ENCODE measurements at regions of chr4 and their contacts with region 1.

Region 1: DNA sequence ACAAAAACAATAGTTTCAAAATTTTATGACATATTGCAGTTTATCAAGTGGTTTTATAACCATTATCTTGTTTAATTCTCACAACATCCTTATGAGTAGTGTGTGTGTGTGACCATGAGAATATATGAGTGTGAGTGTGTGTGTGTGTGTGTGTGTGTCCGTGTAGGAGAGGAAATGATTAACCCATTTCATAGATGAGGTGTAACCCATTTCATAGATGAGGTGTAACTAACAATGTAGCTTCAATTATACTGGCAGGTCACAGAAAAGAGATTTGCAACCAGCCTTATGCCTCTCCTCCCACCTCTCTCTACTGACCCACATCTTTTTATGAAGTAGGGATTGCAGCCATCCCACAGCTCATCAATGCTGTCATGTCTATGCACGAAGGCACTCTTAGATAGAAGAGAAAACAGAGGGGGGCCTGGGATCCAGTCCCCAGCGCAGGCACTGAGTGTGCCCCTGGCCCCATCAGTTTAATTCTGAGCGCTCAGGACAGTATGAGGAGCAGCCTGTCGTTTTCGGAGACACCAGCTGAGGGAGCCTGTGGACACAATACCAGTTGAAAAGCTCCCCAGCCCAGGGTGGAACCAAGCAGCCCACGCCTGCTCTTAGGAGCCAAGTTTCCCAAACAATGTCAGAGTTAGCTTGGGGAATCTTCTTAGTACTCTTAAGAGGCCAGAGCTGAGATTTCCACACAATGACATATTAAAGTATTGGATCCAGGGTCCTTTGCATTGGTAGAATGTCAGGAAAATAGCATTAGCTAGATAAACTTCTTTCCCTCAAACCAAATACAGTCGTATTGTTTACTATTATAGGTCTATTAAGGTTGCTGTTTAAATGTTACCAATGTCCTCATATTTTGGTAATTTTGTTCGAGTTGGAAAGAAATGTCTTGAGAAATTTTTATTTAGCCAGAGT is 88.6 kb downstream of the PALLD start:
- DNase-seq: peak; percentile 82
- ATAC-seq: peak; percentile 87
- H3K4me3 ChIP-seq: no peak overlapping the region
- H3K27ac ChIP-seq: no peak overlapping the region
- H3K4me1 ChIP-seq: peaks cover 18% of the 10 kb centered on the region
- H3K27me3 ChIP-seq: no peaks in the 10 kb centered on the region
- CTCF ChIP-seq: peak; percentile 76
- POLR2A ChIP-seq: no peak
- RAD21 ChIP-seq: peak; percentile 88

Region 2: GRCh38 chr4:168503652-168504362 is 81.6 kb before region 1 on chr4:
- CTCF ChIA-PET with region 1: no interaction called
- POLR2A ChIA-PET with region 1: no interaction called
- dilution Hi-C with region 1: no loop called
- in situ Hi-C with region 1: no loop called
- intact Hi-C with region 1: no loop called
- DNase-seq: no peak
- ATAC-seq: no peak
- H3K4me3 ChIP-seq: no peak overlapping the region
- H3K27ac ChIP-seq: no peak overlapping the region
- H3K4me1 ChIP-seq: no peaks in the 10 kb centered on the region
- H3K27me3 ChIP-seq: no peaks in the 10 kb centered on the region
- CTCF ChIP-seq: no peak
- POLR2A ChIP-seq: no peak
- RAD21 ChIP-seq: no peak

Region 3: GRCh38 chr4:168631241-168632162 is 46.1 kb after region 1 on chr4:
- CTCF ChIA-PET with region 1: interaction called, 10 read pairs
- POLR2A ChIA-PET with region 1: no interaction called
- dilution Hi-C with region 1: no loop called
- in situ Hi-C with region 1: no loop called
- intact Hi-C with region 1: loop called (anchors 1 kb)
- DNase-seq: peak; percentile 55
- ATAC-seq: peak; percentile 78
- H3K4me3 ChIP-seq: peak overlapping the region; percentile 54
- H3K27ac ChIP-seq: peak overlapping the region; percentile 59
- H3K4me1 ChIP-seq: peaks cover 18% of the 10 kb centered on the region
- H3K27me3 ChIP-seq: no peaks in the 10 kb centered on the region
- CTCF ChIP-seq: peak; percentile 45
- POLR2A ChIP-seq: no peak
- RAD21 ChIP-seq: peak; percentile 50

Region 4: GRCh38 chr4:168674077-168674747 is 88.8 kb after region 1 on chr4:
- CTCF ChIA-PET with region 1: interaction called, 6 read pairs
- POLR2A ChIA-PET with region 1: no interaction called
- dilution Hi-C with region 1: no loop called
- in situ Hi-C with region 1: no loop called
- intact Hi-C with region 1: loop called (anchors 1 kb)
- DNase-seq: peak; percentile 65
- ATAC-seq: peak; percentile 85
- H3K4me3 ChIP-seq: no peak overlapping the region
- H3K27ac ChIP-seq: peak overlapping the region; percentile 64; the same call in 1 of the 2 replicates
- H3K4me1 ChIP-seq: peaks cover 10% of the 10 kb centered on the region; the same call in 1 of the 2 replicates
- H3K27me3 ChIP-seq: no peaks in the 10 kb centered on the region
- CTCF ChIP-seq: no peak
- POLR2A ChIP-seq: no peak
- RAD21 ChIP-seq: no peak

Region 5: DNA sequence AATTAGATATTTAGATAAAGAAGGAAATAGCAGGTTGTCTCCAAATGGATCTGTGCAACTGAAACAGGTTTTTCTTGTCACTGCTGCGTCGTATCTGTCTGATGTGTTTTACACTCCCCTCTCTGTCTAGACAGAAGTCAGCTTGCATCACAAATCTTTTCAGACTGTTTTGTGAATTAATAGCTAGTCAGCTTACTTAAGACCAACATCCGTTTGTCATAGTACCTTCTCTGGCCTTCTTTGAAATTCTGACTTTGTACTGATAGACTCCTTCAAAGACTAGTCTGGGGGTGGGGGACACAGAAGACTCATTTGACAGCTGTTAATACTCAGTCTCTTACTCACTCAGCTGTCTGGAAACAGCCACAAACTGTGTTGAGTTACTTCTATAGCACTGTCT is 109.2 kb after region 1 on chr4:
- CTCF ChIA-PET with region 1: interaction called, 6 read pairs
- POLR2A ChIA-PET with region 1: no interaction called
- dilution Hi-C with region 1: no loop called
- in situ Hi-C with region 1: no loop called
- intact Hi-C with region 1: loop called (anchors 2 kb)
- DNase-seq: peak; percentile 72
- ATAC-seq: peak; percentile 79
- H3K4me3 ChIP-seq: no peak overlapping the region
- H3K27ac ChIP-seq: no peak overlapping the region
- H3K4me1 ChIP-seq: peaks cover 14% of the 10 kb centered on the region
- H3K27me3 ChIP-seq: no peaks in the 10 kb centered on the region
- CTCF ChIP-seq: no peak
- POLR2A ChIP-seq: no peak
- RAD21 ChIP-seq: no peak

Region 6: GRCh38 chr4:168815379-168816345 is 230.2 kb after region 1 on chr4:
- CTCF ChIA-PET with region 1: interaction called, 3 read pairs
- POLR2A ChIA-PET with region 1: no interaction called
- dilution Hi-C with region 1: no loop called
- in situ Hi-C with region 1: no loop called
- intact Hi-C with region 1: loop called (anchors 5 kb)
- DNase-seq: peak; percentile 87
- ATAC-seq: peak; percentile 69
- H3K4me3 ChIP-seq: peak overlapping the region; percentile 5; the same call in 1 of the 2 replicates
- H3K27ac ChIP-seq: peak overlapping the region; percentile 92
- H3K4me1 ChIP-seq: peaks cover 19% of the 10 kb centered on the region
- H3K27me3 ChIP-seq: no peaks in the 10 kb centered on the region
- CTCF ChIP-seq: no peak
- POLR2A ChIP-seq: peak; percentile 73
- RAD21 ChIP-seq: 0 out of 2 replicates have a peak, but pooled peaks have one; percentile 5

Region 7: DNA sequence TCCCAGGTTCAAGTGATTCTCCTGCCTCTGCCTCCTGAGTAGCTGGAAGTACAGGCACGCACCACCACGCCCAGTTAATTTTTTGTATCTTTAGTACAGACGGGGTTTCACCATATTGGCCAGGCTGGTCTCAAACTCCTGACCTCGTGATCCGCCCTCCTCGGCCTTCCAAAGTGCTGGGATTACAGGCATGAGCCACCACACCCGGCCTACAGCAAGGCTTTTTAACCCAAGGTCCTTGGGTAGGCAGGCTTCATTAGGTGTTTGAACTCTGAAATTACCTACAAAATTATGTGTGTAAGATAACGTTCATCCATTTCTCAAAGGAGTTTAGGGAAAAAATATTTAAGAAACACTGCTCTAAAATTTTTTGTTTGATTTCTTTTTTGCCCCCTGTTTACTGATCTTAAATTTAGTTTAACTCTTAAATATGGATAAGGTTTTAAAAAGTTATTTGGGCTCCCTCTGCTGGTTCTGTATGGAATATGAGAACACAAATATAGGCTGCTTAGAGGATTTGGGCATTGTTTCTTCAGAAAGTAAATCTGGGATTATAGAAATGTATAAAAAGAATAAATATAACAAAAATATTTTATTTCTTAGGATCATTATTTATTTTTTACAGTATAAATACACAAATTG is 331.8 kb after region 1 on chr4:
- CTCF ChIA-PET with region 1: interaction called, 4 read pairs
- POLR2A ChIA-PET with region 1: no interaction called
- dilution Hi-C with region 1: no loop called
- in situ Hi-C with region 1: no loop called
- intact Hi-C with region 1: loop called (anchors 2 kb)
- DNase-seq: peak; percentile 54
- ATAC-seq: peak; percentile 46
- H3K4me3 ChIP-seq: no peak overlapping the region
- H3K27ac ChIP-seq: no peak overlapping the region
- H3K4me1 ChIP-seq: peaks cover 2% of the 10 kb centered on the region; the same call in 1 of the 2 replicates
- H3K27me3 ChIP-seq: no peaks in the 10 kb centered on the region
- CTCF ChIP-seq: peak; percentile 52
- POLR2A ChIP-seq: no peak
- RAD21 ChIP-seq: peak; percentile 50